ENCODE measurements at regions of chr4 and their contacts with region 1.

Region 1: DNA sequence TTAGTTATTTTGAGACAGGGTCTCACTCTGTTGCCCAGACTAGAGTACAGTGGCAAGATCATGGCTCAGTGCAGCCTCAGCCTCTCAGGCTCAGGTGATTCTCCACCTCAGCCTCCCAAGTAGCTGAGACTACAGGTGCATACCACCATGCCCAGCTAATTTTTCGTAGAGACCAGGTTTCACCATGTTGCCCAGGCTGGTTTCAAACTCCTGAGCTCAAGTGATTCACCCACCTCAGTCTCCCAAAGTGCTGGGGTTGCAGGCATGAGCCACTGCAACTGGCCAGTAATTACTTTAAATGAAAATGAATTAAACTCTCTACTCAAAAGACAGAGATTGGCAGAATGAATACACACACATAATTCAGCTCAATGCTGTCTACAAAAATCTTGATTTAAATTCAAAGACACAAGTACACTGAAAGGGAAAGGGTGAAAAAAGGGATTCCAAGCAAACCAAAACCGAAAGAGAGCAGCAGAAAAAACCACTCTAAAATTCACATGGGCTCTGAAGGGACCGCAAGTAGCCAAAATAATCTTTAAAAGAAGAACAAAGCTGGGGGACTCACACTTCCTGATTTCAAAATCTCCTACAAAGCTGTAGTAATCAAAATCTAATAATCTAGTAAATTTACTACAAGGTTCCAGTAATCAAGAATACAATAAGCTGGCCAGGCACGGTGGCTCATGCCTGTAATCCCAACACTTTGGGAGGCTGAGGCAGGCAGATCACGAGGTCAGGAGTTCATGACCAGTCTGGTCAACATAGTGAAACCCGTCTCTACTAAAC is 11.8 kb upstream of the SPON2 start:
- DNase-seq: peak in 2 of 9 experiments; percentile 46 to 70
- ATAC-seq: no peak
- H3K4me3 ChIP-seq: peak overlapping the region in 1 of 2 experiments; percentile 13
- H3K4me3 Mint-ChIP-seq: peak overlapping the region; percentile 63
- H3K27ac ChIP-seq: peak overlapping the region in 1 of 2 experiments; percentile 61
- H3K27ac Mint-ChIP-seq: peak overlapping the region; percentile 32
- H3K4me1 ChIP-seq: peaks cover 19% of the 10 kb centered on the region
- H3K4me1 Mint-ChIP-seq: peaks cover 33% of the 10 kb centered on the region
- H3K27me3 ChIP-seq: no peaks in the 10 kb centered on the region
- H3K27me3 Mint-ChIP-seq: no peaks in the 10 kb centered on the region
- CTCF ChIP-seq: no peak

Region 2: GRCh38 chr4:1055721-1056590 is 128.2 kb before region 1 on chr4:
- CTCF ChIA-PET with region 1: no interaction called
- POLR2A ChIA-PET with region 1: no interaction called
- intact Hi-C with region 1: no loop called
- DNase-seq: peak; percentile 76 to 96 (median 85)
- ATAC-seq: peak; percentile 94
- H3K4me3 ChIP-seq: peak overlapping the region; percentile 42 to 48
- H3K4me3 Mint-ChIP-seq: peak overlapping the region; percentile 72
- H3K27ac ChIP-seq: peak overlapping the region; percentile 70 to 76
- H3K27ac Mint-ChIP-seq: peak overlapping the region; percentile 92
- H3K4me1 ChIP-seq: peaks cover 16% of the 10 kb centered on the region
- H3K4me1 Mint-ChIP-seq: peaks cover 18% of the 10 kb centered on the region
- H3K27me3 ChIP-seq: no peaks in the 10 kb centered on the region
- H3K27me3 Mint-ChIP-seq: no peaks in the 10 kb centered on the region
- CTCF ChIP-seq: no peak

Region 3: GRCh38 chr4:3047464-3048286 is 1863.5 kb after region 1 on chr4:
- CTCF ChIA-PET with region 1: no interaction called
- POLR2A ChIA-PET with region 1: no interaction called
- intact Hi-C with region 1: loop called in 1 of 2 experiments (anchors 10 kb)
- DNase-seq: peak; percentile 44 to 87 (median 64)
- ATAC-seq: peak; percentile 73
- H3K4me3 ChIP-seq: peak overlapping the region; percentile 44 to 50
- H3K4me3 Mint-ChIP-seq: peak overlapping the region; percentile 78
- H3K27ac ChIP-seq: peak overlapping the region; percentile 27 to 79
- H3K27ac Mint-ChIP-seq: peak overlapping the region; percentile 60
- H3K4me1 ChIP-seq: peaks cover 15% of the 10 kb centered on the region
- H3K4me1 Mint-ChIP-seq: peaks cover 29% of the 10 kb centered on the region
- H3K27me3 ChIP-seq: no peaks in the 10 kb centered on the region
- H3K27me3 Mint-ChIP-seq: no peaks in the 10 kb centered on the region
- CTCF ChIP-seq: peak; percentile 61

Measured in CD8-positive, alpha-beta T cell (primary cell).